ENCODE measurements at regions of chr7 and their contacts with region 1.

Region 1: GRCh38 chr7:4753711-4754432 is 21.6 kb upstream of the AP5Z1 start:
- DNase-seq: peak; percentile 73 to 93 (median 80)
- ATAC-seq: peak; percentile 76 to 86 (median 82)
- H3K4me3 ChIP-seq: no peak overlapping the region
- H3K27ac ChIP-seq: no peak overlapping the region
- H3K4me1 ChIP-seq: peaks cover 0 to 25% (median 8%) of the 10 kb centered on the region in 12 donors
- H3K27me3 ChIP-seq: no peaks in the 10 kb centered on the region
- CTCF ChIP-seq: peak; percentile 76 to 91 (median 85)
- POLR2A ChIP-seq: no peak

Region 2: GRCh38 chr7:4610768-4611467 is 143.0 kb before region 1 on chr7:
- intact Hi-C with region 1: loop called in 2 of 10 experiments (anchors 1 to 10 kb)
- DNase-seq: peak in 3 of 5 donors; percentile 30 to 48 (median 39)
- ATAC-seq: peak in 3 of 4 donors; percentile 54 to 78 (median 74)
- H3K4me3 ChIP-seq: no peak overlapping the region
- H3K27ac ChIP-seq: no peak overlapping the region
- H3K4me1 ChIP-seq: peaks cover 0 to 20% (median 9%) of the 10 kb centered on the region in 12 donors
- H3K27me3 ChIP-seq: no peaks in the 10 kb centered on the region
- CTCF ChIP-seq: peak; percentile 72 to 92 (median 81)
- POLR2A ChIP-seq: no peak

Region 3: GRCh38 chr7:4631664-4632171 is 122.2 kb before region 1 on chr7:
- intact Hi-C with region 1: loop called in 2 of 10 experiments (anchors 5 kb)
- DNase-seq: peak; percentile 66 to 84 (median 79)
- ATAC-seq: peak; percentile 78 to 98 (median 95)
- H3K4me3 ChIP-seq: peak overlapping the region in 9 of 12 donors; percentile 18 to 41 (median 32)
- H3K27ac ChIP-seq: peak overlapping the region in 3 of 12 donors; percentile 43 to 64 (median 44)
- H3K4me1 ChIP-seq: peaks cover 0 to 13% (median 6%) of the 10 kb centered on the region in 12 donors
- H3K27me3 ChIP-seq: no peaks in the 10 kb centered on the region
- CTCF ChIP-seq: peak; percentile 42 to 78 (median 65)
- POLR2A ChIP-seq: no peak

Region 4: DNA sequence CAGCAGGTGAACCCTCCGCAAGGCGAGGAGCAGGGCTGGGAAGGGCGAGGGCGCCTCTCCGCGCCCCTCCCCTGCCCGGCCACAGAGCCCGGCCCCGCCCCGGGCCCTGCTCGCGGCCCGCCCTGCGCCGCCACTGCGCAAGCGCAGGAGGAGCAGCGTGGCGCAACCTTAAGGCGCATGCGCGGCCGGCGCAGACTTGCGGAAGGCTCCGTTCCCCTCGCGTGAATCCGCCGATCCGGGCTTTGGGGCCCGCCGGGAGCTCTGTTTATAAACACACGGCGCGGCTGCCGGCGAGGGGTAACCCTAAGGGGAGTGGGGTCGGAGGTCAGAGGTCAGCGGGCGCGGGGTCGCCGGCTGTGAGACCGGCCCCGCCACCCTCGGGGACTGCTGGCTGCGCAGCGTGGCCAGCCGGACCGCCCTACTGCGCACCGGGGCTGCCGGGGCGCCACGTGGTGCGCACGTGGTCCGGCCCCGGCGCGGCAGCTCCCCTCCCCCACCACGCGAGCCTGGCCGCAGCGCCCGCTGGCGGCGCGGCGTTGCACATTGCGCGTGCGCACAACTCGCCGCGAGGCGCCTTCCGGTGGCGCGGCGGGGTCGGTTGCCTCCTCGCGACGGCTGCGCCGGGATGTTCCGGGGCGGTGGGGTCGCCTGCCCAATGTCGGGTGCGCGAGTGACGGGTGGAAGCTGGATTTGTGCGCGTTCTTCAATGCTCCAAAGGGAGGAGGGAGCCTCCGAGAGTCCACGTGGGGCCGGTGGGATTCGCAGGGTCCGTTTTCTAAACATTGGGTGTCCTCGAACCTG is 112.0 kb before region 1 on chr7:
- intact Hi-C with region 1: loop called in 2 of 10 experiments (anchors 5 kb)
- DNase-seq: peak; percentile 92 to 98 (median 95)
- ATAC-seq: peak; percentile 92 to 98 (median 96)
- H3K4me3 ChIP-seq: peak overlapping the region; percentile 15 to 77 (median 64)
- H3K27ac ChIP-seq: peak overlapping the region; percentile 61 to 93 (median 86)
- H3K4me1 ChIP-seq: peaks cover 0 to 15% (median 9%) of the 10 kb centered on the region in 12 donors
- H3K27me3 ChIP-seq: no peaks in the 10 kb centered on the region
- CTCF ChIP-seq: peak in 11 of 12 donors; percentile 10 to 79 (median 55)
- POLR2A ChIP-seq: peak in 1 of 2 donors; percentile 50